ENCODE measurements at regions of chr13 and their contacts with region 1.

Region 1: DNA sequence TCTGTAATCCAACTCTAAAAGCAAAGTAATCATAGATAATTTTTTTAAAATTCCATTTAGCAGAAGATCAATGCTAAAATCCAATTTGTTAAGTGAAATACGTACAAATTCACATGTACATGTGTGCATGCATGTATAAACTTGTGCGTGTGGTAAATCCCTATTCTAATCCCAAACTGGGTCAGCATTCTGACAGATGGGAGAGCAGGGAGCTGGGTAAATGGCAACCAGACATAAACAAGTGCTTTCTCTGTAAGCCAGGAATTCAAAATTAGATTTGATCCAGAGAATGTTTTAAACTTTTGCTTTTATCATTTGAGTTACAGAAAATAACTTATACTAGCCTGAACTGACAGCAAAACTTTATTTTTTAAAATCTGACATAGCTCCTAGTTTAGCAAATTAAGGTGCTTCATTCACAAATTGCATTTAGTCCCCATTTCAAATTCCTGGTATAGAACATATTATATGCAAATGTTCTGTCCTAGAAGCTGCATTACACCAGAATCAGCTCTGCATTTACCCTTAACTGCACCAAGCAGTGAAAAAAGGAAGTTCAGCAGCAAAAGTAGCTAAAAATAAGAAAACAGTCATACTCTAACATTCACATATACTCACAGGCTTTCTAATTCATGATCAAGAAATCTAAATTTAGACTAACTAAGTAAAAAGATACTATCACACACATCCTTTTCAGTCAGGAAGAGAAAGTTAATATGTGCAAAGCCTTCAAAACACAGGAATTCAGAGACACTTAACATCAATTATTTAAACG is 32.6 kb downstream of the UBL3 start:
- DNase-seq: peak; percentile 69
- ATAC-seq: peak; percentile 97
- H3K4me3 ChIP-seq: peak overlapping the region; percentile 46; the same call in 1 of the 2 replicates
- H3K27ac ChIP-seq: peak overlapping the region; percentile 87
- H3K4me1 ChIP-seq: peaks cover 23% of the 10 kb centered on the region; the same call in 1 of the 2 replicates
- H3K27me3 ChIP-seq: no peaks in the 10 kb centered on the region
- CTCF ChIP-seq: no peak
- EP300 ChIP-seq: peak; percentile 38 to 54; a peak in 2 of 4 replicates
- POLR2A ChIP-seq: no peak
- RAD21 ChIP-seq: 0 out of 2 replicates have a peak, but pooled peaks have one; percentile 12

Region 2: GRCh38 chr13:28655561-28655960 is 1162.2 kb before region 1 on chr13:
- CTCF ChIA-PET with region 1: no interaction called
- POLR2A ChIA-PET with region 1: no interaction called
- RAD21 ChIA-PET with region 1: no interaction called
- SMC1A ChIA-PET with region 1: no interaction called
- in situ Hi-C with region 1: no loop called
- intact Hi-C with region 1: no loop called
- DNase-seq: no peak
- ATAC-seq: no peak
- H3K4me3 ChIP-seq: no peak overlapping the region; the same call in 1 of the 2 replicates
- H3K27ac ChIP-seq: no peak overlapping the region
- H3K4me1 ChIP-seq: no peaks in the 10 kb centered on the region
- H3K27me3 ChIP-seq: no peaks in the 10 kb centered on the region
- CTCF ChIP-seq: no peak
- EP300 ChIP-seq: no peak
- POLR2A ChIP-seq: no peak
- RAD21 ChIP-seq: no peak

Region 3: DNA sequence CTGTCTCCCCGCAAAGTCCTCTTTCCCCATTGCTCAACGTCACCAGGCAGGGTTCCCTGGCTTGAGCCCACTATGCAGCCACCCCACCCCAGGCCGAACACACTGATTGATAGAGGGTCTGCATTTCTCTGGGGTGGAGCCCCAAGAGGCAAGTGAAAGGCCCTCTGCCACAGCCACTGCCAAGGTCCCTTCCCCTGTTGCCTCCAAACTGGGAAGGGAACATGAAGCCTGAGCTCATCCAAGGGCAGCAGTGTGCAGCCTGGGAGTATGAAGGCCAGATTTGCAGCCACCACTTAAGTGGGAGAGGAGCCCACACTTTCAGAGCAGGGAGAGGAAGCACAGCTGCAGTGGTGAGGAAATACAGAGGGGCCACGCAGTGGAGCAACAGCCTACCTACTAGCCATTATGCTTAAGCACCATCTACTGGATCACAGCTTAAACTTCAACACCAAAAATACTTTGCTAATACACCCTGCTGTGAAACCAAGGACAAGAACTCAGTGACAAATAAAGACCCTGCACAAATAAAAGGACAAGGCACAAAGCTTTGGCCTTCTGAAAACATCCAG is 16.0 kb before region 1 on chr13:
- CTCF ChIA-PET with region 1: interaction called, 6 read pairs
- POLR2A ChIA-PET with region 1: interaction called, 3 read pairs
- RAD21 ChIA-PET with region 1: interaction called, 5 read pairs
- SMC1A ChIA-PET with region 1: interaction called, 50 read pairs
- in situ Hi-C with region 1: no loop called
- intact Hi-C with region 1: no loop called
- DNase-seq: no peak
- ATAC-seq: 0 out of 3 replicates have a peak, but pooled peaks have one; percentile 16
- H3K4me3 ChIP-seq: no peak overlapping the region
- H3K27ac ChIP-seq: no peak overlapping the region
- H3K4me1 ChIP-seq: peaks cover 3% of the 10 kb centered on the region; the same call in 1 of the 2 replicates
- H3K27me3 ChIP-seq: no peaks in the 10 kb centered on the region
- CTCF ChIP-seq: peak in 2 of 3 experiments; percentile 10 to 22; a peak in 2 of 6 replicates
- EP300 ChIP-seq: no peak
- POLR2A ChIP-seq: no peak
- RAD21 ChIP-seq: peak; percentile 61; the same call in 1 of the 2 replicates

Measured in GM12878 (cell line).